Activated B cell treated with CpG ODN at 0.5 μM for 24 hours (primary cell): ENCODE measurements at regions of chr19 and their contacts with region 1.

Region 1: GRCh38 chr19:54023191-54023590 is 31.8 kb downstream of the CACNG6 start:
- DNase-seq: no peak
- ATAC-seq: no peak
- H3K4me3 Mint-ChIP-seq: no peak overlapping the region
- H3K27ac Mint-ChIP-seq: no peak overlapping the region
- H3K4me1 Mint-ChIP-seq: peaks cover 6% of the 10 kb centered on the region
- H3K27me3 Mint-ChIP-seq: peaks cover 26% of the 10 kb centered on the region
- CTCF ChIP-seq: no peak

Region 2: DNA sequence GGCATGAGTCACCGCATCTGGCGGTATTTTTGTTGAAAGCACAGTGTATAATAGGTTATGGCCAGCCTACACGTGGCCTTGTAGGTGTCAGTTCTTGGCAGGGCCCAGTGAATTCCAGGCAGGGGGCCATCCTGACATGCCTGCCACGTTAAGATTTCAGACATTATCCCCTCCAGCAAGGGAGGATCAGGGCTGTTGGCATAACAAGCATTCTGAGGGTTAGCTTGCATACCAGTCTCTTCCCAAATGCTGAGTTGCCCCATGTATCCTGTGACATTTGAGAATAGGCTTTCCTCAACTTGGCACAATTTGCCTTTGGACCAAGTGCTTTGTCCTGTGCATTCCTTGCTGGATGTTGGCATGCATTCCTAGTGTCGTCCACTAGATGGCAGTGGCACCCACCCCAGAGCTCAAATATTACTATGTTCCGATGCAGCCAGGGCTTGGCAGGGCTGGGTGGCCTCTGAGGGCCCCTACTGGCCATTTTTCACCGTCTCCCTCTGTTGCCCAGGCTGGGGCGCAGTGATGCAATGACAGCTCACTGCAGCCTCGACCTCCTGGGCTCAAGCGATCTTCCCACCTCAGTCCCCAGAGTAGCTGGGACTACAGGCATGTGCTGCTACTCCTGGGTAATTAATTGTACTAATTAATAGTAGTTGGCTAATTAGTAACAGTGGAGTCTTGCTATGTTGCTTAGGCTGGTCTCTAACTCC is 230.3 kb before region 1 on chr19:
- CTCF ChIA-PET with region 1: interaction called, 19 read pairs
- POLR2A ChIA-PET with region 1: no interaction called
- intact Hi-C with region 1: loop called (anchors 1 kb)
- DNase-seq: peak; percentile 45
- ATAC-seq: peak; percentile 98
- H3K4me3 Mint-ChIP-seq: no peak overlapping the region
- H3K27ac Mint-ChIP-seq: no peak overlapping the region
- H3K4me1 Mint-ChIP-seq: no peaks in the 10 kb centered on the region
- H3K27me3 Mint-ChIP-seq: peaks cover 1% of the 10 kb centered on the region
- CTCF ChIP-seq: peak; percentile 81